ENCODE measurements at regions of chr1 and their contacts with region 1.

Region 1: GRCh38 chr1:45359882-45360513 is 19.8 kb upstream of the MUTYH start:
- DNase-seq: no peak

Region 2: GRCh38 chr1:45490626-45491486 is 130.9 kb after region 1 on chr1 and contains the start of gene TESK2:
- intact Hi-C with region 1: loop called (anchors 1 kb)
- DNase-seq: peak; percentile 98
- total RNA-seq, gene TESK2: 1.0 TPM

Region 3: GRCh38 chr1:45550401-45551351 is 190.7 kb after region 1 on chr1 and contains the start of gene AKR1A1:
- intact Hi-C with region 1: loop called (anchors 5 kb)
- DNase-seq: peak; percentile 95
- total RNA-seq, gene AKR1A1: 47.3 TPM

Region 4: DNA sequence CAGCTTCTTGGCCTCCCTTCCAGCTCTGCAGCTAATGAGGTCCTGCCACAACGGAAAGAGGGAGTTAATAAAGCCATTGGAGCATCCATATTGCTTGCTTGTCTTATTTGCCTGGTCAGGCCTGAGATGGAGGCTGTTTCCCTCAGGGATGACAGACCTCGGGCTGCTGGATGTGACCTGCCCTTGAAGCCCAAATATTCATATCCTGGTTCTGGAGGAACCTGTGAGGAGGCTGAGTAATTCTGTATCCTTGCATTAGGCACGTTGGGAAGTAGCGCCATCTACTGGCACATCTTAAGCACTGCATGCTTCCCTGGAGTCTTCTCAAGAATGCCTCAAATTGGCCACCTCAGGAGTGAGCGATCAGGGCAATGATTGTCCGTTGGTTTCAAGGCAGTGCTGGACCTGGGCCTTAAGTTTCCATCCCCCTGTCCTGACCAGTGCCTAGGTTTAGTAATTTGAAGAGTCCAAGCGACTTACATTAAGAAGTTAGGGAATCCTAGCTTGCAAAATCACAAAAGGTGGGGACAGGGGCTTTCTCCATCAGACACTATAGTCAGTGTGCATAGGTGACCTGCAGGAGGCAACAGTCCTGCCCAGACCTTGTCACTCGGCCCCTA is 210.1 kb after region 1 on chr1:
- intact Hi-C with region 1: loop called (anchors 5 kb)
- DNase-seq: peak; percentile 81

Measured in cardiac septum (tissue), 1 donor.